HCT116 (cell line): ENCODE measurements at regions of chr12 and their contacts with region 1.

Region 1: DNA sequence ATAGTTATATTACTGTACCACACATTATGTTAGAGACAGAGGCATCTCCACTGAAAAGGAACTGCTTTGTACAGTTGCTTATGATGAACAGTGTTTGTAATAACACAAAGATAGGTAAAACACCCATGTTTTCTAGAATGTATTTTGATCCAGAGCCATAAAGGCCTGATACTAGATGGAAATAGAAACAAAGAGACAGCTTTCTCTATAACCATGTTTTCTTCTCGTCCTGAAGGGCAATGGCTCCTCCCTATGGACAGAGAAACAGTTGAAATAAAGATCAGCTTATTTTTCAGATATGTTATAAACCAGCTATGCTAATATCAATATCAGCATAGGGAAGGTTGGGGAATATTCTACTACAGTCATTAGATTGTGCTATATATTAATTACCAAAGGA is 109.2 kb downstream of the ATXN7L3B start:
- DNase-seq: peak; percentile 37
- ATAC-seq: peak; percentile 64
- H3K4me3 ChIP-seq: no peak overlapping the region
- H3K27ac ChIP-seq: no peak overlapping the region
- H3K4me1 ChIP-seq: no peaks in the 10 kb centered on the region
- H3K27me3 ChIP-seq: no peaks in the 10 kb centered on the region
- CTCF ChIP-seq: peak; percentile 30 to 57 (median 49); a peak in 4 of 6 replicates
- POLR2A ChIP-seq: no peak
- RAD21 ChIP-seq: peak; percentile 79

Region 2: DNA sequence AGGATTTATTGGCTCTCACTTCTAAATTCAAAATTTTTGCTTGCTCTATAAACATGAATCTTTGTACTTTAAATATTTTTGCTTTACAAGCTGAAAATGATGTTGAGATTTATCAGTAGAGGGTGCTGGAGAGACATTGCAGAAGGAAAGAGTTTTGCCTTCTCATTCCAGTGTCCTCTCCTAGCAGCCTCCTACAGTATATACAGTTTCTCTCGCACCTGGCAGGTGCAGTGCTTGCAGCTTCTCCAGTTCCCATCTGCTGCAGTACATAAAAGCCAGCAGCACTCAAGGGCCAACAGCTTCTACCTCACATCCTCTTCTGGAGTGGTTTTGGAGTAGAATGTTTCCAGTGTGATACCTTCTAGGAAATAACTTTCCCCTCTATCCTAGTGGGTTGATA is 711.0 kb before region 1 on chr12:
- CTCF ChIA-PET with region 1: interaction called, 6 read pairs
- POLR2A ChIA-PET with region 1: no interaction called
- RAD21 ChIA-PET with region 1: no interaction called
- intact Hi-C with region 1: loop called (anchors 5 kb)
- DNase-seq: peak; percentile 24
- ATAC-seq: peak; percentile 78
- H3K4me3 ChIP-seq: no peak overlapping the region
- H3K27ac ChIP-seq: no peak overlapping the region
- H3K4me1 ChIP-seq: no peaks in the 10 kb centered on the region
- H3K27me3 ChIP-seq: no peaks in the 10 kb centered on the region
- CTCF ChIP-seq: peak; percentile 37 to 54 (median 52); a peak in 4 of 6 replicates
- POLR2A ChIP-seq: no peak
- RAD21 ChIP-seq: peak; percentile 72

Region 3: DNA sequence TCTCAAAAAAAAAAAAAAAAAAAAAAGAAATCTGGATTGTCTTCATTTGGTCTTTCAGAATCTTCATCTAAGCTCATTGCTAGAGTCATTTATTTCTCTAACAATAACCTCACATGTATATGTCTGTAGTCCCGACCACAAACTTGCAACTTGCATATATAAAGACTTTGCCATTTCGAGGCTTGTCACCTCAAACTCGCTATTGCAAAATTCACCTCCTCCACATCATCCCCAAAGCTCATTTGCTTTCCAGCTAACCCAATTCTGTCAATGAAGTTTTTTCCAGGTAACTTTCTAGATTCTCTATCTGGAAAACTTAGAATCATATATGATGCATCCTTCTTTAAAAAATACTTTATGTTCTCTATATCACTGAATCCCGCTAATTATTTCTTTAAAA is 502.4 kb before region 1 on chr12:
- CTCF ChIA-PET with region 1: no interaction called
- POLR2A ChIA-PET with region 1: no interaction called
- RAD21 ChIA-PET with region 1: no interaction called
- intact Hi-C with region 1: no loop called
- DNase-seq: no peak
- ATAC-seq: no peak
- H3K4me3 ChIP-seq: no peak overlapping the region
- H3K27ac ChIP-seq: no peak overlapping the region
- H3K4me1 ChIP-seq: no peaks in the 10 kb centered on the region
- H3K27me3 ChIP-seq: no peaks in the 10 kb centered on the region
- CTCF ChIP-seq: no peak
- POLR2A ChIP-seq: no peak
- RAD21 ChIP-seq: no peak